ENCODE measurements at regions of chr17 and their contacts with region 1.

Region 1: GRCh38 chr17:78497115-78497540 is 80.1 kb downstream of the DNAH17 start:
- DNase-seq: peak; percentile 71
- H3K4me3 ChIP-seq: no peak overlapping the region
- H3K27ac ChIP-seq: no peak overlapping the region
- H3K4me1 ChIP-seq: no peaks in the 10 kb centered on the region
- H3K27me3 ChIP-seq: no peaks in the 10 kb centered on the region
- CTCF ChIP-seq: peak; percentile 14 to 80 (median 64)
- POLR2A ChIP-seq: no peak

Region 2: DNA sequence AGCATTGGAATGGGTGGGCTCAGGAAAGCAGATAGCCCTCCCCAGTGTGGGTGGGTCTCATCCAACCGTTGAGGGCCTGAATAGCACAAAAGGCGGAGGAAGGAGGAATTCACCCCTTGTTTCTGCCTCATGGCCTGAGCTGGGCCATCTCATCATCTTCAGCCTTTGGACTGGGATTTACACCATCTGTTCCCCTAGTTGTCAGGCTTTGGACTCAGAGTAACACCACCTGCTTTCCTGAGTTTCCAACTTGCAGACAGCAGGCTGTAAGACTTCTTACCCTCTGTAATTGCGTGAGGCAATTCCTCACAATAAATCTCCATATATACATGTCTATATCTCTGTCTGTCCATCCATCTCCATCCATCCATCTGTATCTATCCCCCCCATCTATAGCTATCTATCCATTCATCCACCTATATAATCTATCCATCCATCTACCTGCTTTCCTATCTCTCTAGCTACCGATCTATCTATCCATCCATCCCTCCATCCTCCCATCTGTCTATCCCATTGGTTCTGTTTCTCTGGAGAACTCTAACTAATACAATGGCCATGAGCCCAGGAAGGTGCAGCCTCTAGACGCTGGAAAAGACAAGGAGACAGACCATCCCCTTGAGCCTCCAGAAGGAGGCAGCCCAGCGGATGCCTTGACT is 58.7 kb after region 1 on chr17:
- intact Hi-C with region 1: no loop called
- DNase-seq: no peak
- H3K4me3 ChIP-seq: no peak overlapping the region
- H3K27ac ChIP-seq: no peak overlapping the region
- H3K4me1 ChIP-seq: no peaks in the 10 kb centered on the region
- H3K27me3 ChIP-seq: no peaks in the 10 kb centered on the region
- CTCF ChIP-seq: no peak
- POLR2A ChIP-seq: no peak

Region 3: GRCh38 chr17:78708510-78708973 is 211.4 kb after region 1 on chr17:
- intact Hi-C with region 1: loop called (anchors 5 kb)
- DNase-seq: peak; percentile 49
- H3K4me3 ChIP-seq: no peak overlapping the region
- H3K27ac ChIP-seq: no peak overlapping the region
- H3K4me1 ChIP-seq: no peaks in the 10 kb centered on the region
- H3K27me3 ChIP-seq: no peaks in the 10 kb centered on the region
- CTCF ChIP-seq: peak; percentile 30 to 77 (median 70)
- POLR2A ChIP-seq: no peak

Region 4: DNA sequence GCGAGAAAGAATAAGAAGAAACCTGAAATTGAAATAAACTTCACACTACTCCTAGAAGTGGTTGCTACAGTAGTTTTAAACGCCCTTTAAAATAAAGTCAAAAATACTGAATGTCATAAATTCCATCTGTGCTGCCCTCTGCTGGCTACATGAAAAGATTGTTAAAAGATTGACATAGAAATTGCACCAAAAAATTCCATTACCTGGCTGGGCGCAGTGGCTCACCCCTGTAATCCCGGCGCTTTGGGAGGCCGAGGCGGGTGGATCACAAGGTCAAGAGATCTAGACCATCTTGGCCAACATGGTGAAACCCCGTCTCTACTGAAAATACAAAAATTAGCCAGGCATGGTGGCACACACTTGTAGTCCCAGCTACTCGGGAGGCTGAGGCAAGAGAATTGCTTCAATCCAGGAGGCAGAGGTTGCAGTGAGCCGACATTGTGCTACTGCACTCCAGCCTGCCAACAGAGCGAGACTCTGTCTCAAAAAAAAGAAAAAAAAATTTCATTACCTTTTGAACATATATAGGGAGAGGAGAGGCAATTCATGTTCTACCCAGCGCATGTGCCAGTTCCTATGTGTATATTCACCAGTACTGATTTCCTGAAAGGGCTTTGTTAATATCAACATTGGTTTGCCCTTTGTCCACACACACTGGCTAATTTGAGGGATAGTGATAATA is 248.4 kb after region 1 on chr17:
- intact Hi-C with region 1: loop called (anchors 5 kb)
- DNase-seq: no peak
- H3K4me3 ChIP-seq: no peak overlapping the region
- H3K27ac ChIP-seq: no peak overlapping the region
- H3K4me1 ChIP-seq: peaks cover 14% of the 10 kb centered on the region
- H3K27me3 ChIP-seq: no peaks in the 10 kb centered on the region
- CTCF ChIP-seq: peak in 3 of 4 experiments; percentile 57 to 63 (median 58)
- POLR2A ChIP-seq: no peak